Dendritic cell treated with granulocyte-macrophage colony-stimulating factor and Interleukin-4, amounts not matched to agents 40 ng/mL and 50 ng/mL, for 4 days (primary cell): ENCODE measurements at regions of chr17 and their contacts with region 1.

Region 1: GRCh38 chr17:58658804-58659713 is 32.8 kb downstream of the TEX14 start:
- H3K4me3 Mint-ChIP-seq: peak overlapping the region; percentile 63
- H3K27ac Mint-ChIP-seq: peak overlapping the region; percentile 99
- H3K4me1 Mint-ChIP-seq: peaks cover 24% of the 10 kb centered on the region
- H3K27me3 Mint-ChIP-seq: peaks cover 2% of the 10 kb centered on the region

Region 2: DNA sequence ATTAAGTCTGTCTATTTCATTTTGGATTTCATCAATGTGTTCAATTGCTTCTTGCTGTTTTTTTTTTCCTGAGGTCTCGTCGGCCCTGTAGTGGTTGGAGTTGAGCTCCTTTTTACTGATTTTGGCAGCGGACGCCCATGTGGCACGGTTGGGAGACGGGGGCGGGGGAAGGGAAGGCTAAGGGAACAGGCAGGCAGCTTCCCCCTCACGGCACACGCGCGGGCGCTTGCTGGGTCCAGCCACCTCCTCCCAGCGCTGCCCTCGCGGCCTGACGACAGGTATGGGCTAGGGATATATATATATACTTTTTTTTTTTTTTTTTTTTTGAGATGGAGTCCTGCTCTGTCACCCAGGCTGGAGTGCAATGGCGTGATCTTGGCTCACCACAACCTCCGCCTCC is 182.2 kb before region 1 on chr17:
- intact Hi-C with region 1: no loop called
- H3K4me3 Mint-ChIP-seq: no peak overlapping the region
- H3K27ac Mint-ChIP-seq: no peak overlapping the region
- H3K4me1 Mint-ChIP-seq: peaks cover 6% of the 10 kb centered on the region
- H3K27me3 Mint-ChIP-seq: peaks cover 7% of the 10 kb centered on the region

Region 3: DNA sequence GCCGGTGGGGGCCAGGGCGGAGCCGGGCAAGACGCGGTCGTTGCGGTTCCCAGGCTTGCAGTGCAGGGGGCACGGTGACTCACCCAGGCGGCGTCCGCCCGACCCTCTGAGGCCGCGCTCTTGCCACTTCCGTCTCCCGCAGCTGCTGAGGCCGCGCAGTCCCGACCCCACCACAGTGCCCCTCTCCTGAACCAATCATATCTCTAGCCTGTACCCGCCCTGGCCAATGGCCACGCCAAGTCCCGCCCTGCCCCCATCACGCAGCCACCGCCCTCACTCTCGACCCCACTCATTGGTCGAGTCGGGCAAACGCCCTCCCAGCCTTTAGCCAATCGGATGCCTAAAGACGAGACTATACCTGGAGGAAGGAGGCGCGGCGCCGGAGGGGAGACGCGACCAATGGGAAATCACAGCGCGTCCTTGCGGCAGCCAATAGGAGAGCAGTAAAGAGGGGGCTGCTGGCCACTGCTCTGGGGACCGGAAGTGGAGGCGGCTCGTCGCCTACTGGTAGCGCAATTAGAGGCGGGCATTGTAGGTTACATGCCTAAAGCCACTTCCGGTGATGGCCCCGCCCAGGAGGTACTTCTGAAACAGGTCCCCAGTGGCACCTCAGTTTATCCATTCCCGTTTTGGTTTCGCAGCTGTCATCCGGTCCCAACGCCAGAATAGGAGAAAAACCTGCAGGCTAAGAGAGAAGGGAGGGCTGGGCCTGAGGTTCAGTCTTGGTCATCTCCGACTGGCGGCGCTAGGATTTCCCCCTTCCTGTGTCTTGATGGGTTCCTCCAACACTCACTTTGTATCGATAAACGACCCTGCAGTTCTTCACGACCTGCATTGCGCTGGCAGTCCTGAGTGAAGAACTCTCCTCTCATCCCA is 141.1 kb before region 1 on chr17:
- intact Hi-C with region 1: loop called (anchors 1 kb)
- H3K4me3 Mint-ChIP-seq: peak overlapping the region; percentile 85
- H3K27ac Mint-ChIP-seq: peak overlapping the region; percentile 97
- H3K4me1 Mint-ChIP-seq: peaks cover 47% of the 10 kb centered on the region
- H3K27me3 Mint-ChIP-seq: peaks cover 10% of the 10 kb centered on the region

Region 4: DNA sequence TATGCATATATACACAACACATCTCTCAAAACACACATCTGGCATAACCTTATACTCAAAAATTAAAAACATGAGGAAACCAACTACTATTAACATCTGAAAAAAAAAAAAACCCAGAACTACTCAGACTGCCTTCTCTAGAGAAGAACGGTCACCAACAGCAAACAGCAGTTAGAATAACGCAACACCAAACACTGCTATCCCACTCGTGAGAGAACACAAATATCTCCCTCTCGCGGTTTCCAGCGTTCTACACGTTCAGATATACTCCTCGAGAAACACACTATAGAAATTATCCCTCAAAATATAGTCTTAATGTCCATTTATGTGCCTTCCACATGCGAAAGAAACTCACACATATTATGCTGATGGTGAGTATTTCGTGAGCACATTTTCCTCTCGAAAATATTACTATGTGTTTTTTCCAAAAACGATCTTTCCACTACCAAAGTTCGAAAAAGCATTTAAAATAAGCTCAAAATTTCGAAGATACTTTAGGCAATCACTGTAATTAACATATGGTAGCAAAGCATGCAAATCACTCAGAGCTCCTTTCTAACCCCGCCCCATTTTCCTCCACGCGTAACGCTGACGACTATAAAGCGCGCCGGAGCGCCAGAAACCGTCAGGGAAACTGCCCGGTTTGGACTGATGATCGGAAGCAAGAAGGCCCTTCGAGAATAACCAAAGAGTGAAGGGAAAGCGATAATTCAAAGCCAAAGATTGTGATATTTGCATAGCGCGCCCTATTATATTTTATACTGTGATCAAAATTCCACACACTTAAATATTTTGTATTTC is 27.3 kb before region 1 on chr17:
- intact Hi-C with region 1: loop called (anchors 1 kb)
- H3K4me3 Mint-ChIP-seq: no peak overlapping the region
- H3K27ac Mint-ChIP-seq: no peak overlapping the region
- H3K4me1 Mint-ChIP-seq: peaks cover 25% of the 10 kb centered on the region
- H3K27me3 Mint-ChIP-seq: peaks cover 2% of the 10 kb centered on the region

Region 5: GRCh38 chr17:58692239-58693055 is 33.4 kb after region 1 on chr17 and contains the start of gene RAD51C:
- intact Hi-C with region 1: loop called (anchors 1 kb)
- H3K4me3 Mint-ChIP-seq: peak within 1 kb of the TSS; percentile 85
- H3K27ac Mint-ChIP-seq: peak within 1 kb of the TSS; percentile 92
- H3K4me1 Mint-ChIP-seq: peaks cover 17% of the 10 kb centered on the region
- H3K27me3 Mint-ChIP-seq: no peaks in the 10 kb centered on the region